ENCODE measurements at regions of chr1 and their contacts with region 1.

Region 1: GRCh38 chr1:187588917-187589316 is 760.2 kb downstream of the PLA2G4A start:
- DNase-seq: no peak
- H3K4me3 ChIP-seq: no peak overlapping the region
- H3K27ac ChIP-seq: no peak overlapping the region
- H3K4me1 ChIP-seq: no peaks in the 10 kb centered on the region
- H3K27me3 ChIP-seq: no peaks in the 10 kb centered on the region
- CTCF ChIP-seq: no peak
- POLR2A ChIP-seq: no peak

Region 2: DNA sequence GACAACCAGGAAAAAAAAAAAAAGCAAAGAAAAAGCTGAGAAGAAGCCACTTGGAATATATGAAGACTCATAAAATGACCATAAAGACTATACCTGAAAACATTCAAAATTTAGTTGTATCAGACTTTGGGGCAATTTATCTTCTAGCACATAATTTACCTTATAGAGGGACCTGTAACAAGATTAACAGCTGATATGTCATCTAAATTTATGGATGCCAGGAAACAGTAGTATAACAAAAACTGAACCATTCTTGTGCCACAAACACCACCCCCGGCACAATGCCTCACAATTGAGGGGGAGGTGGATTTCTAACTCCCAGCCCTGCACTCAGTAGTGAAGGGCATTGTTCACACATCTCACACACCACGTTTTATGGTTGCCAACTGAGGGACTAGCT is 1536.8 kb after region 1 on chr1:
- intact Hi-C with region 1: loop called (anchors 5 kb)
- DNase-seq: no peak
- H3K4me3 ChIP-seq: no peak overlapping the region
- H3K27ac ChIP-seq: no peak overlapping the region
- H3K4me1 ChIP-seq: no peaks in the 10 kb centered on the region
- H3K27me3 ChIP-seq: no peaks in the 10 kb centered on the region
- CTCF ChIP-seq: no peak
- POLR2A ChIP-seq: no peak